PC-3 (cell line): ENCODE measurements at regions of chr7 and their contacts with region 1.

Region 1: GRCh38 chr7:18666107-18666728 is 170.7 kb downstream of the HDAC9 start:
- DNase-seq: peak; percentile 81
- ATAC-seq: peak; percentile 70
- H3K4me3 ChIP-seq: no peak overlapping the region
- H3K27ac ChIP-seq: no peak overlapping the region
- H3K4me1 ChIP-seq: peaks cover 25% of the 10 kb centered on the region
- H3K27me3 ChIP-seq: no peaks in the 10 kb centered on the region
- CTCF ChIP-seq: peak; percentile 97

Region 2: GRCh38 chr7:18590744-18591340 is 75.4 kb before region 1 on chr7:
- CTCF ChIA-PET with region 1: interaction called, 3 read pairs
- POLR2A ChIA-PET with region 1: interaction called, 3 read pairs
- intact Hi-C with region 1: loop called (anchors 1 kb)
- DNase-seq: peak; percentile 56
- ATAC-seq: peak; percentile 75
- H3K4me3 ChIP-seq: no peak overlapping the region
- H3K27ac ChIP-seq: no peak overlapping the region
- H3K4me1 ChIP-seq: no peaks in the 10 kb centered on the region
- H3K27me3 ChIP-seq: no peaks in the 10 kb centered on the region
- CTCF ChIP-seq: peak; percentile 76